ENCODE measurements at regions of chr22 and their contacts with region 1.

Region 1: DNA sequence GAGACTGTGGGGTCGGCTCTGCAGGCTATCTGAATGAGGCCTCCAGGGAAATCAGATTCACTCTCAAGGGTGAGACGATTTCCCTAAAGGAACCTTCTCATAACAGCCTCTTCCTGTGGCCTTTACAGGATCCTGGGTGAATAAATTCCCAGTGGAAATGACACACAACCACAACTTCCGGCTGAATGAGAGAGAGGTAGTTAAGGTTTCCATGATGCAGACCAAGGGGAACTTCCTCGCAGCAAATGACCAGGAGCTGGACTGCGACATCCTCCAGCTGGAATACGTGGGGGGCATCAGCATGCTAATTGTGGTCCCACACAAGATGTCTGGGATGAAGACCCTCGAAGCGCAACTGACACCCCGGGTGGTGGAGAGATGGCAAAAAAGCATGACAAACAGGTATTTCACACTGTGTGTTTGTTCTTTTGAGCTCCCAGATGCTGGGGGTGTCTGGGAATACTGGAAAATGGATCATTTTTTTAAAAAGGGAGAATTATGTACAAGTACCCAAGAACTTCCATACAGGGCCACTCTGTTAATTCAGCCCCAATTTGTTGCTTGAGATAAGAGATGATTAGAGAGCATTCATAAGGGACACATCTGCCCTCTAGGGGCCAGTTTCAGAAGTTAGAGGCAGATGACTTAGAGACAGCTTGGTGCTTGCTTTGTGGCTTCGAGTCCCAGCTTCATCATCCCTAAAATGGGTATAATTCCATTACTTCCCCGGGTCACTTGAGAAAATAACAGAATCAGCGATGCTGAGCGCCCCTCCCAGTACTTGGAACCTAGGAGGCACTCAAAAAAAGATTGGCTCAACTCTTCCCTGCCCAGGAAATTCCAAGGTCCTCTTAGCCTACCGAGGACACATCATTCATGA is 10.2 kb downstream of the SERPIND1 start:
- DNase-seq: peak; percentile 45
- ATAC-seq: peak; percentile 72
- H3K4me3 Mint-ChIP-seq: no peak overlapping the region
- H3K27ac Mint-ChIP-seq: no peak overlapping the region
- H3K4me1 Mint-ChIP-seq: peaks cover 30% of the 10 kb centered on the region
- H3K27me3 Mint-ChIP-seq: no peaks in the 10 kb centered on the region
- CTCF ChIP-seq: peak; percentile 50

Region 2: DNA sequence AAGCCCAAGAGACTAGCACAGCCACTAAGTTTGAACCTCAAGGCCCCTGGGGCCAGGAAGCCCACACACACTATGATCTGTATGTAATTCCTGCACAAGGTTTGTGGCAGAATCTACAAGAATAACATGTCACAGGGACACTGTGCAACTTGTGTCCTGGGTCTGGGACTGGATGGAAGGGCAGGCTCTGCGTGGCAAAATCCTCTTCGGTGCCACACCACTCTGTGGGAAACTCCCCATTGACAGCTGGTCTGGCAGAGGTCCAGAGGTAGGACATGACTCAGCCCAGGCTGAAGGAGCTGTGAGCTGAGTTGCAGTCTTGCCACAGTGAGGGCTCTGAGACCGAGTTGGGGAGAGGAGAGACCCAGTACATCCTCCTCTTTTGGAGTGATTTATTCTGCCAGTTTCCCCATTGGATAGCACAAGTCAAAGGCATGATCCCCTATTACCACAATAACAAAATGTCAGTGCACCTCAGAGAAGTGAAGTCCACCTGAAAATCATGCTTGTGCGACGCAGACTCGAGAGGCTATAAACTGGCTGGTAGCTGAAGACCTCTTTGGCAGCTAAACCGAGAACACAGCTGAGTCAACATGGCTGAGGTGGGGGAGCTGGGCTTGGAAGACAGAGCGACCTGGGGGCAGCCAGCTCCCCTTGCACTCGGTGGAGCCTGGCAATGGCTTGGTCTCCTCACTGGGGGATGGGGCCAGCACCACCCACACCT is 33.5 kb before region 1 on chr22:
- CTCF ChIA-PET with region 1: interaction called, 10 read pairs
- POLR2A ChIA-PET with region 1: no interaction called
- DNase-seq: no peak
- ATAC-seq: no peak
- H3K4me3 Mint-ChIP-seq: no peak overlapping the region
- H3K27ac Mint-ChIP-seq: no peak overlapping the region; the same call in 1 of the 2 replicates
- H3K4me1 Mint-ChIP-seq: no peaks in the 10 kb centered on the region
- H3K27me3 Mint-ChIP-seq: no peaks in the 10 kb centered on the region
- CTCF ChIP-seq: no peak

Region 3: DNA sequence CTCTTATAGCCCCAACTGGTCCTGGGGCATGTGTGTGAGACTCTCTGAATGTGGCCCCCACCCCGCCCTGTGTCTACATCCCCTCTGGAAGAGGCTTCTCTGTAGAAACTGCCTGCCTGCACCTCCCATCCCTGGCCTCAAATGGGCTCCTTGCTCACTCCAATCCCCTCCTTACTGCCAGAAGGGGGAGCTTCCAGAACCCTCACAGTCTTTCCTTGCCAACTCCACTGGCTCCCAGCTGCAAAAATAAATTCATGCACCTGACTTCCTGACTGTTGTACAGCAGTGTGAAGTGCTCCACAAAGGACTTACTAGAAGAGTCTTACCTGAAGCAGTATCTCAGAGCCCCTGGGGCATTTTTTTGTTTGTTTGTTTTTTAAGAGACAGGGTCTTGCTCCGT is 25.4 kb before region 1 on chr22:
- CTCF ChIA-PET with region 1: interaction called, 34 read pairs
- POLR2A ChIA-PET with region 1: no interaction called
- DNase-seq: peak; percentile 30
- ATAC-seq: peak; percentile 76
- H3K4me3 Mint-ChIP-seq: no peak overlapping the region
- H3K27ac Mint-ChIP-seq: no peak overlapping the region
- H3K4me1 Mint-ChIP-seq: no peaks in the 10 kb centered on the region
- H3K27me3 Mint-ChIP-seq: no peaks in the 10 kb centered on the region
- CTCF ChIP-seq: no peak

Region 4: DNA sequence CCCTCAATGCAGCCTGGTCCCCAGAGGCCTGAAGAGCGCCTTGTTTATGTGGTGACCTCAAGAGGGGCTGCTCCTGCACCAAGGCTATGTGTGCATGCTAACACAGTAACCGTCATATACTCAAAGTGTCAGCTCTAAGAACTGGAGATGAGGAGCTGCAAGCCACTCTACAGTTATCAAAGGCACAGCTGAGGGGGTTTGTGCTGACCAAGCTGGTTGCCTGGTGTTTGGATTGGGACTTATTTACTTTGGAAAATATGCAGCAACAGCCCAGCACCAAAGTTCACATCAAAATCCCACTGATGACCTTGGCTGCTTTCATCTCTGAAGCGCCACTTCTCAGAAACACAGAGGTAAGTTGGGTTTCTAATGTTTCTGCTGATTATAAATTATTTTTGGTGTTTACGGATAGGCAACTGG is 10.3 kb before region 1 on chr22 and contains the start of gene SERPIND1:
- CTCF ChIA-PET with region 1: interaction called, 14 read pairs
- POLR2A ChIA-PET with region 1: no interaction called
- DNase-seq: no peak
- ATAC-seq: no peak
- H3K4me3 Mint-ChIP-seq: no peak within 1 kb of the TSS
- H3K27ac Mint-ChIP-seq: peak within 1 kb of the TSS; percentile 53; the same call in 1 of the 2 replicates
- H3K4me1 Mint-ChIP-seq: peaks cover 2% of the 10 kb centered on the region; the same call in 1 of the 2 replicates
- H3K27me3 Mint-ChIP-seq: no peaks in the 10 kb centered on the region
- CTCF ChIP-seq: no peak
- total RNA-seq, gene SERPIND1: 0.09 to 0.25 TPM (median 0.22 TPM) in 3 replicates